BJ (cell line): ENCODE measurements at regions of chr17 and their contacts with region 1.

Region 1: DNA sequence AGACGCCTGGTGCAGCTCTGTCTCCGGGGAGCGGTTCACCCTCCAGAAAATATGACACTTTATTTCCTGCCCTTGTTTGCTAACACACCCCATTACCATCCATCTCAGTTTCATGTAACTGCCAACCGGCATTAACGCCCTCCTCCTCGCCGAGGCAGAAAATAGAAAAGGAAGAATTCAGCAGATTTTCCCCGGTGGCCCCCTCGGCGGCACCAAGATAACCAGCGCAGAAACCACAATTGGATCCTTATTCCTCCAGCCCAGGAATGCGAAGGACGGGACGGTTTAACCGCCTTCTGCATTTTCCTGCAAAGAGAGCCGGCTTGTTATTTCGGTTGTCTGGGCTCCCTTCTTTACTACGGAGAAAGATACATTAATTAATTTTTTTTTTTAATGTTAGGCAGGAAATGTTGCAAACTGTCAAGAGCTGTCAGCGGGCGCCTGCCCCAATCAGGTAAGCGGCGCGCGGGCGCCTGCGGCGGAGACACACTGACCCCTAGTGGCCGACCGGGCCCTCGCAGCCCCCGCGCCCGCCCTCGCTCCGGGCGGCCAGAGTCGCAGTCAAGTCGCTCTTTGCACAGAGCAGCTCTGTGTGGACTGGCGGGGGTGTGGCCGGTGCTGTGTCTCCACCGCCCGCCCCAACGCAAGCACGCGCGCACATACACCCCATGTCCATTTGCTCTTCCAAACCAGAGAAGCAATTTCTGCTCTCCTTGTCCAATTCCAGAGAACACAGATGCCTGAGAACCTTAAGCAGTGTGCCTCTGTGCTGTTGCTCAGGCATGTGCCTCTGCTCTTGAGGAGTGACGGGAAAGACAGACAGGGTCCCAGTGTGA is 53.6 kb downstream of the C17orf67 start:
- DNase-seq: no peak
- H3K4me3 ChIP-seq: peak overlapping the region; percentile 26; the same call in 1 of the 2 replicates
- H3K27me3 ChIP-seq: 0 out of 2 replicates have a peak, but pooled peaks cover 3% of the 10 kb centered on the region
- CTCF ChIP-seq: peak; percentile 80

Region 2: GRCh38 chr17:56592487-56593085 is 187.5 kb before region 1 on chr17:
- CTCF ChIA-PET with region 1: interaction called, 63 read pairs
- POLR2A ChIA-PET with region 1: no interaction called
- DNase-seq: no peak
- H3K4me3 ChIP-seq: peak overlapping the region; percentile 49
- H3K27me3 ChIP-seq: peaks cover 21% of the 10 kb centered on the region
- CTCF ChIP-seq: peak; percentile 58

Region 3: DNA sequence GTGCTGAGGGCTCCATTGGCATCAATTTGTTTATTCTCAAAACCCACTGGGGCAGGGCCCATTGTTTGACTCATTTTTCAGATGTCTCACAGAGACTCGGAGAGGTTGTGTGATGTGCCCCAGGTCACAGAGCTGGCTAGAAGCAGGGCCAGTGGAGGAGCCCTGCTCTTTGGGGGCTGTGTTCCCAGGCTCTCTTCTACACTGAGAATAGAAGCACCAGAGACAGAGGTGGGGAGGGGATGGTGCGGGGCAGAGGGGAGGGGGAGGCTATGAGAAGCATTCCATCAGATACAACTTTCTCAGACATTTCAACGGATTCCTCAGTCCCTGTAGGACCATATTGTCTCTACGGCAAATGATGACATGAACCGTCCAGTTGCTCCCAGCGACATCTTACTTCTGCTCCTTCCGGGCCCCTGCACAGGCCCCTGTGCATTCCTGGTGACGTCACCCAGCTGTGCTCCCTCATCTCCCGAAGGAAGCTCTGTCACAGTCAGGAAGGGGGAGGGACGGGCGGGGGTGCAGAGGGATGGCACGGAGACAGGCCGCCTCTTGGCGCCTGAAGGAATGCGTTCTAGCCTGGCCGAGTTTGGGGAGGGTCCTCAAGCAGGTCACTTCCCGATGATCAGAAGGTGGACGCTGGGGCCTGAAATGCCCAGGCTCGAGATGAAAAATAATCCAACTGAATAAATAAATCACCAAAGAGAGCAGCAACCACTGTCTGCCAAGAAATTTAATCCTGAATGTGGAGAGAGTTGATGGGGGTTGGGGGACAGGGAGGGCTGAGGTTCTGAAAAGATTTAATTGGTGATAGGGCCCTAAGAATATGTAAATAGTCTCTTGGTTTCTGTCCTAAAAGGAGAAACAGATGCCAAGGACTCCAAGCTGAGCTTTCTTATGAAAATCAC is 72.5 kb before region 1 on chr17:
- CTCF ChIA-PET with region 1: interaction called, 14 read pairs
- POLR2A ChIA-PET with region 1: no interaction called
- DNase-seq: no peak
- H3K4me3 ChIP-seq: no peak overlapping the region
- H3K27me3 ChIP-seq: no peaks in the 10 kb centered on the region
- CTCF ChIP-seq: no peak

Region 4: DNA sequence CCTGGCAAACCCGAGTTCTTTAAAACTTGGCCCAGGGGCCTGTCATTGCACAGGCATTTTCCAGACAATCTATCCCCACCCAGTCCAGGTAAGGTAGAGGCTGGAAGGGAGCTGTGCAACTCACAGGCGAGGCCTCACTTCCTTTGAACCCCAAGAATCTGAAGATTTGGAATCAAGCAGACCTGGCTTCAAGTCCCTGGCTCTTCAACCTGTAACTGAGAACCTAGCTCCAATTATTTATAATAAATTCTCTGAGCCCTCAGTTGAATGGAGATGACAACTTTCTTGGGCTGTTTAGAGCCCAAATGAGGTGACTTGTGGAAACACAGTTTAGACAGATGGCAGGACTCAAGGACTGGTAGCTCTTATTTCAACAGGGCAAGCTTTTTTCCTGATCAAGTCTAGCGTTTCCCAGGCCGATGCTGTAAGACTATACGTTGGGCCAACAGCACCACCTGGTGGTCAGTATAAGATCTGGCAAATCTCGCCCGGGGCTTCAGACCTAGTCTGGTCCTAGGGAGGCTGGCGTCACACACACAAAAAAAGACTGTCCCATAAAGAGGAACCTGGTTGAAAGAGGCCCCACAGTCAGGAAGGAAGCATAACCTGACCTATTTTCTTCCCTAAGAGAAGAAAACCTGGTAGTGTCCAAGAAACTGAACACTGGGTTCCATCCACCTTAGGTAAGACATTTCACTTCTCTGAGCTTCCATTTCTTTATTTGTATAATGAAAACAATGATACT is 64.3 kb before region 1 on chr17:
- CTCF ChIA-PET with region 1: interaction called, 46 read pairs
- POLR2A ChIA-PET with region 1: no interaction called
- DNase-seq: no peak
- H3K4me3 ChIP-seq: no peak overlapping the region
- H3K27me3 ChIP-seq: no peaks in the 10 kb centered on the region; the same call in 1 of the 2 replicates
- CTCF ChIP-seq: peak; percentile 80

Region 5: DNA sequence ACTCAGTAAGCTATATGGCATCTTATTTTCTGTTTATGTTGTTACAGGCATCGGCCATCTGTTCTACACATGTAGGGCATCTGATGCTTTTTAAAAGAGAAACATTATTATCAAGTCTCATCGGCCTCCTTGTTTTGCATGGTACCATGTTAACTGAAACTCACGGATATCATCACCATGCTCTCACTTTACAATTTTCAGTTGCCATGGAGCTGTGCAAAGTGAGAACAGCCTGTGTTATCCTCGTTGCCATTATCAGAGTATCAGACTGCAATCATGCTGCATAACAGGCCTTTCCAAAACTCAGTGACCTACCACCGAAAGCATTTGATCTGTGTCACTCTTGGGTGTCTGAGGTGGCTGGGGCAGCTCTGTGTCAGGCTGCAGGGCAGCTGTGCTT is 56.7 kb before region 1 on chr17:
- CTCF ChIA-PET with region 1: interaction called, 46 read pairs
- POLR2A ChIA-PET with region 1: no interaction called
- DNase-seq: no peak
- H3K4me3 ChIP-seq: no peak overlapping the region
- H3K27me3 ChIP-seq: peaks cover 3% of the 10 kb centered on the region; the same call in 1 of the 2 replicates
- CTCF ChIP-seq: no peak

Region 6: DNA sequence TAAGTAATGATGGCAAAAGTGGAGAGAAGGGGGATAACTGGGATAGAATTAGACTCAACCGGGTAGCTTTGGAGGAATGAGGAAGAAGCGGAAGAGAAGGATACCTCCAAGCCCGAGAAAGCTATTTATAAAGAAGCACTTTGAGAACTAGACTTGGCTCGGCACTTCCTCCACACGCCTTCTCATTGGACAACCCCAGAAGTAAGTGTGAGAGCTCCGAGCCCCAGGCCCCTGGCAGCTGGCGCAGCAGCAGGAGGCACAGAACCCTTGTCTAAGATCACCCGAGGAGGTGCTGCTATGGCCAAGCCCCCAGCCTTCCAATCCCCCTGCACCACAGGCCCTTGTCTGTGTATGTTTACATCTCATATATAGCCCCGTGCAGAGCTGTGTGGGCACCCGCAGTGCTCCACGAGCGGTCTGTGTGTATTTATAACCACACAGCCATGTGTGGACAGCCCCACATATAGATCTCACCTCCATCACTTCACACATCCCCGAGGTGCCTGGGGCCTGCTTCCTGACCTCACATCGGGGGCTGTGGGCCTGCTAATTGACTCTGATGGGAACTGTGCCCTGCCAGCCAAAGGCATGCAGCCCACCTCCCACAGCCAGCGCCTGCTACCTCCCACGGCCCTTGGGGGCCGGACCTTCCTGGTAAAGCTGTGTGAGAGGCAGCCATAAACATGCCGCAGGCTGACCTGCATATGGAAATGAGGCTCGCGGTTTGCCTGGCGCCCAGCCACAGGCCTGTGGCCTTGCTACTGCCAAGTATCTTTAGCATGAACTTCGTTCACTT is 42.6 kb before region 1 on chr17:
- CTCF ChIA-PET with region 1: interaction called, 16 read pairs
- POLR2A ChIA-PET with region 1: no interaction called
- DNase-seq: no peak
- H3K4me3 ChIP-seq: no peak overlapping the region
- H3K27me3 ChIP-seq: no peaks in the 10 kb centered on the region; the same call in none of the 2 replicates
- CTCF ChIP-seq: no peak

Region 7: DNA sequence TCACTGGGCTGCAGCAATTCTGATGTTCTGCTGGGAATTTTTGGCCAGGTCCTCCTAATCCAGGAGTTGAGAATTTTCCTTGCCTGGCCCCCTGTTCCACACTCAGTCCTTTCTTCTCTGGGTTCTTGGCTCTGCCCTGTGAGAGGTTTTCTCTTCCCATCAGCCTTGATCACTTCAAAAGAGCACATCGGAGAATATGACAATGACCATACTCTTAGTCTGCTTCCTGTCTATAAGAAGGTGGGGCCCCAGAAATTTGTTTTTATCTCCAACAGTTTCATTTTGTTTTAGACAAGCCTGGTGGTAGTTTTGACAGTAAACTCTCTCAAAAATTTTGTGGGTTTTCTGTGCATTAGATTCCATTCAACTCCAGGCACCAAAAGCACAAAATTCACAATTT is 17.1 kb before region 1 on chr17:
- CTCF ChIA-PET with region 1: interaction called, 46 read pairs
- POLR2A ChIA-PET with region 1: no interaction called
- DNase-seq: no peak
- H3K4me3 ChIP-seq: no peak overlapping the region
- H3K27me3 ChIP-seq: no peaks in the 10 kb centered on the region; the same call in 1 of the 2 replicates
- CTCF ChIP-seq: no peak